CD8-positive, alpha-beta T cell (primary cell): ENCODE measurements at regions of chr7 and their contacts with region 1.

Region 1: GRCh38 chr7:142412551-142413193 is 154.8 kb upstream of the PRSS58 start:
- DNase-seq: peak in 7 of 9 experiments; percentile 9 to 70 (median 26)
- ATAC-seq: peak; percentile 75
- H3K4me3 ChIP-seq: no peak overlapping the region
- H3K4me3 Mint-ChIP-seq: no peak overlapping the region
- H3K27ac ChIP-seq: no peak overlapping the region
- H3K27ac Mint-ChIP-seq: peak overlapping the region; percentile 49
- H3K4me1 ChIP-seq: no peaks in the 10 kb centered on the region
- H3K4me1 Mint-ChIP-seq: peaks cover 3% of the 10 kb centered on the region
- H3K27me3 ChIP-seq: no peaks in the 10 kb centered on the region
- H3K27me3 Mint-ChIP-seq: no peaks in the 10 kb centered on the region
- CTCF ChIP-seq: peak; percentile 71

Region 2: DNA sequence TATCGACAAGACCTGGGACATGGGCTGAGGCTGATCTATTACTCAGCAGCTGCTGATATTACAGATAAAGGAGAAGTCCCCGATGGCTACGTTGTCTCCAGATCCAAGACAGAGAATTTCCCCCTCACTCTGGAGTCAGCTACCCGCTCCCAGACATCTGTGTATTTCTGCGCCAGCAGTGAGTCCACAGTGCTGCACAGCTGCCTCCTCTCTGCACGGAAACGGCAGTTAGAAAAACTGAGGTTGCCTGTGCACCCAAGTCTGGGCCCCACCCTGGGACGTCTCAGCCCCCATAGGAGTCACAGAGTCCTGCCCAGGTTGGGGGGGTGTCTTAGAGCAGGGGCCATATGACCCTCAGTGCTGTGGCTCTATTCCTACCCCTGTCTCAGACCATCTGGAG is 12.6 kb after region 1 on chr7:
- CTCF ChIA-PET with region 1: interaction called, 22 read pairs
- POLR2A ChIA-PET with region 1: no interaction called
- intact Hi-C with region 1: no loop called
- DNase-seq: no peak
- ATAC-seq: peak; percentile 34
- H3K4me3 ChIP-seq: no peak overlapping the region
- H3K4me3 Mint-ChIP-seq: no peak overlapping the region
- H3K27ac ChIP-seq: no peak overlapping the region
- H3K27ac Mint-ChIP-seq: peak overlapping the region; percentile 22
- H3K4me1 ChIP-seq: no peaks in the 10 kb centered on the region
- H3K4me1 Mint-ChIP-seq: peaks cover 10% of the 10 kb centered on the region
- H3K27me3 ChIP-seq: no peaks in the 10 kb centered on the region
- H3K27me3 Mint-ChIP-seq: no peaks in the 10 kb centered on the region
- CTCF ChIP-seq: no peak

Region 3: GRCh38 chr7:142714375-142714774 is 301.7 kb after region 1 on chr7:
- CTCF ChIA-PET with region 1: no interaction called
- POLR2A ChIA-PET with region 1: no interaction called
- intact Hi-C with region 1: no loop called
- DNase-seq: peak in 7 of 9 experiments; percentile 20 to 71 (median 49)
- ATAC-seq: peak; percentile 61
- H3K4me3 ChIP-seq: no peak overlapping the region
- H3K4me3 Mint-ChIP-seq: peak overlapping the region; percentile 63
- H3K27ac ChIP-seq: peak overlapping the region in 1 of 2 experiments; percentile 70
- H3K27ac Mint-ChIP-seq: peak overlapping the region; percentile 76
- H3K4me1 ChIP-seq: peaks cover 54% of the 10 kb centered on the region
- H3K4me1 Mint-ChIP-seq: peaks cover 68% of the 10 kb centered on the region
- H3K27me3 ChIP-seq: no peaks in the 10 kb centered on the region
- H3K27me3 Mint-ChIP-seq: no peaks in the 10 kb centered on the region
- CTCF ChIP-seq: no peak